ENCODE measurements at regions of chr1 and their contacts with region 1.

Region 1: GRCh38 chr1:178308438-178308837 is 188.3 kb downstream of the CLEC20A start:
- DNase-seq: no peak
- H3K4me3 ChIP-seq: no peak overlapping the region
- H3K27ac ChIP-seq: no peak overlapping the region
- H3K4me1 ChIP-seq: peaks cover 0 to 4% (median 0%) of the 10 kb centered on the region in 3 donors
- H3K27me3 ChIP-seq: no peaks in the 10 kb centered on the region
- CTCF ChIP-seq: no peak

Region 2: GRCh38 chr1:178501705-178502329 is 193.4 kb after region 1 on chr1:
- intact Hi-C with region 1: loop called (anchors 10 kb)
- DNase-seq: peak; percentile 77 to 88 (median 83)
- H3K4me3 ChIP-seq: no peak overlapping the region
- H3K27ac ChIP-seq: no peak overlapping the region
- H3K4me1 ChIP-seq: no peaks in the 10 kb centered on the region
- H3K27me3 ChIP-seq: no peaks in the 10 kb centered on the region
- CTCF ChIP-seq: peak; percentile 75

Region 3: DNA sequence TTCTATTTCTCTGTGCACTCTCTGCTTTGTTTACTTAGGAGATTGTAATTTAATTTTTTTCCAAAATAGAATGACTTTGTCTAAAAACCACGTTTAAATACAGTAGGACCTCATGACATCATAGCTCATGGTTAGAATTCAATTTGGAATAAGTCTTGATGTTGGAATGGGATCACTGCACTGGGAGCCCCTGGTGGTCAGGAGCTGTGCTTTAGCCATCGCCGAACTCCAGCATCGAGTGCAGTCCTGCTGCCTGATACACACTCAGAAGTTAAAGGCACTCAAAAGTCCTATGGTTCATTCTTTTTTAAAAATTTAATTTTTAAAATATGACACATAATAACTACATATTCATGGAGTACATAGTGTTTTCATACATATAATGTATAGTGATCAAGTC is 279.5 kb after region 1 on chr1:
- intact Hi-C with region 1: no loop called
- DNase-seq: no peak
- H3K4me3 ChIP-seq: no peak overlapping the region
- H3K27ac ChIP-seq: no peak overlapping the region
- H3K4me1 ChIP-seq: no peaks in the 10 kb centered on the region
- H3K27me3 ChIP-seq: no peaks in the 10 kb centered on the region
- CTCF ChIP-seq: no peak

Measured in kidney (tissue), 22 donors.